Naive thymus-derived CD4-positive, alpha-beta T cell (primary cell): ENCODE measurements at regions of chr4 and their contacts with region 1.

Region 1: DNA sequence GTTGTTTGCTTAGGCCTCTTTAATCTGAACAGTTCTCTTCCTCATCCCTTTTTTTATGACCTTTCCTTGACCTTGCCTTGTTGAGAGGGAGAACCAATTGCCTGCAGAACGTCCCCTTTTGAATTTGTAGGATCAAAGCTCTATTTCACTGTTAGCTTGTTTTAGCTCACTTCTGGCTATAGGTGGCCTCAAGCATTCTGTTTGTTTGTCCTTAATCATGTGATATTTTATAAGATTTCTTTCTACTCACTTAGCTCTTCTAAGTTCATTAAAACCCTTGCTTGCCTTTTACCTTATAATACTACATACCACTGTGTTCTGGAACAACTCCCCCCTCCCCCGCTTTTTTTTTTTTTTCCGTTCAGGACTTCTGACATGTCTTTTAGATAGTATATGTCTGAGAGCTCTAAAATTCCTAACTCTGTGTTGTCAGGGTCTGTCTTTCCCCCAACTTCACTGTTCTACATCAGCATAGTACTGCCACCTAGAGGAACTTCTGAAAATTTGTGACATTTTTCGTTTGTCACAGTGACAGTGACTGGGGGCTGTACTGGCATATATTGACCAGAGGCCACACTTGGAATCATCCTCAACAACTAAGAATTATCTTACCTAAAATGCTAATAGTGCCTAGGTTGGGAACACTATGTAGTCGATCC is 128.5 kb downstream of the LARP7 start:
- DNase-seq: peak in 1 of 9 donors; percentile 6
- ATAC-seq: no peak
- H3K4me3 ChIP-seq: no peak overlapping the region
- H3K4me3 Mint-ChIP-seq: no peak overlapping the region
- H3K27ac ChIP-seq: no peak overlapping the region
- H3K27ac Mint-ChIP-seq: no peak overlapping the region
- H3K4me1 ChIP-seq: no peaks in the 10 kb centered on the region
- H3K4me1 Mint-ChIP-seq: peaks cover 0 to 4% (median 2%) of the 10 kb centered on the region in 7 donors
- H3K27me3 ChIP-seq: no peaks in the 10 kb centered on the region
- H3K27me3 Mint-ChIP-seq: peaks cover 3 to 9% (median 4%) of the 10 kb centered on the region in 5 donors

Region 2: DNA sequence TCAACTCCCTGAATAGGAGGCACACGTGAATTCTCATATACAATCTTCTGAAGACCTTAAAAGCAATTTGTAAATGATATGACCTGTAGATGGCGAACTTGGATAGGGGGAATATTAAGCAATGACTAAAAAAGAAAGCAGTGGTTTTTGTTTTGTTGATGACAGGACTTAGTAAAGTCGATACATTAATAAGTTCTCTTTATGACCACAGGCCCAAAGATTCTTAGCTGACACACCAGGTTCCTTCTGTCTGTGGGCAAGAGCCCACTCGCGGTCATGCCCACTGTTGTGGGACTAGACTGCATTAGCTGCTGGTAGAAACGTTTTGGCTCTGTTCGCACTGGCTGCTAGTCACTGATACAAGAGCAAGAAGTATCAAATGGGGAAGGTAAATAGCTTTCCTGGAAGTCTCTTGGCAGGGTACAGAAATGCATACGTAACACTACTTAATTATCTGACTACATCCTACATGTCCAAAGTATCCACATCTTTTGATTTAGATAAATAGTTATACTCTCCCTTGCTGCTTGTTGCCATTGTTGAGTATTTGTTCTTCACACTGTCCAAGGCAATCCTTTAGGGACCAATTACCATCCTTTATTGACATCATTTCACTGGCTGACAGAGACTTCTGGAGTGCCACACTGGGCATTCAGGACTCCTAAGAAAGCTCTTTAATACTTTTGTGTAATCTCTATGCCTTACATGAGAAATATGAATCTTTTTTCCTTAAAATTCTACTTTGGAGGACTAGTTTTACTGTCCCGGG is 437.3 kb before region 1 on chr4:
- CTCF ChIA-PET with region 1: interaction called, 3 read pairs
- POLR2A ChIA-PET with region 1: no interaction called
- intact Hi-C with region 1: loop called (anchors 5 kb)
- DNase-seq: peak in 4 of 9 donors; percentile 21 to 27 (median 24)
- ATAC-seq: peak; percentile 60
- H3K4me3 ChIP-seq: no peak overlapping the region
- H3K4me3 Mint-ChIP-seq: no peak overlapping the region
- H3K27ac ChIP-seq: no peak overlapping the region
- H3K27ac Mint-ChIP-seq: no peak overlapping the region
- H3K4me1 ChIP-seq: no peaks in the 10 kb centered on the region
- H3K4me1 Mint-ChIP-seq: peaks cover 0 to 9% (median under 1%) of the 10 kb centered on the region in 7 donors
- H3K27me3 ChIP-seq: no peaks in the 10 kb centered on the region
- H3K27me3 Mint-ChIP-seq: no peaks in the 10 kb centered on the region

Region 3: GRCh38 chr4:112704991-112705845 is 60.2 kb before region 1 on chr4:
- CTCF ChIA-PET with region 1: no interaction called
- POLR2A ChIA-PET with region 1: no interaction called
- intact Hi-C with region 1: loop called in 1 of 2 experiments (anchors 5 kb)
- DNase-seq: peak in 2 of 9 donors; percentile 2
- ATAC-seq: no peak
- H3K4me3 ChIP-seq: peak overlapping the region; percentile 31
- H3K4me3 Mint-ChIP-seq: peak overlapping the region; percentile 71 to 90 (median 84)
- H3K27ac ChIP-seq: no peak overlapping the region
- H3K27ac Mint-ChIP-seq: peak overlapping the region in 1 of 9 donors; percentile 46
- H3K4me1 ChIP-seq: peaks cover 5% of the 10 kb centered on the region in 2 donors
- H3K4me1 Mint-ChIP-seq: peaks cover 14 to 21% (median 18%) of the 10 kb centered on the region in 7 donors
- H3K27me3 ChIP-seq: peaks cover 0 to 17% of the 10 kb centered on the region in 2 donors
- H3K27me3 Mint-ChIP-seq: peaks cover 58 to 68% (median 60%) of the 10 kb centered on the region in 5 donors

Region 4: GRCh38 chr4:112938461-112939058 is 173.1 kb after region 1 on chr4:
- CTCF ChIA-PET with region 1: no interaction called
- POLR2A ChIA-PET with region 1: no interaction called
- intact Hi-C with region 1: loop called in 1 of 2 experiments (anchors 1 kb)
- DNase-seq: peak in 3 of 9 donors; percentile 3 to 14 (median 4)
- ATAC-seq: no peak
- H3K4me3 ChIP-seq: no peak overlapping the region
- H3K4me3 Mint-ChIP-seq: no peak overlapping the region
- H3K27ac ChIP-seq: no peak overlapping the region
- H3K27ac Mint-ChIP-seq: no peak overlapping the region
- H3K4me1 ChIP-seq: no peaks in the 10 kb centered on the region
- H3K4me1 Mint-ChIP-seq: no peaks in the 10 kb centered on the region
- H3K27me3 ChIP-seq: no peaks in the 10 kb centered on the region
- H3K27me3 Mint-ChIP-seq: peaks cover 9 to 26% (median 23%) of the 10 kb centered on the region in 5 donors

Region 5: GRCh38 chr4:114694770-114695169 is 1929.3 kb after region 1 on chr4:
- CTCF ChIA-PET with region 1: no interaction called
- POLR2A ChIA-PET with region 1: no interaction called
- intact Hi-C with region 1: loop called in 1 of 2 experiments (anchors 2 kb)
- DNase-seq: peak in 5 of 9 donors; percentile 1 to 17 (median 9)
- ATAC-seq: no peak
- H3K4me3 ChIP-seq: no peak overlapping the region
- H3K4me3 Mint-ChIP-seq: no peak overlapping the region
- H3K27ac ChIP-seq: no peak overlapping the region
- H3K27ac Mint-ChIP-seq: no peak overlapping the region
- H3K4me1 ChIP-seq: no peaks in the 10 kb centered on the region
- H3K4me1 Mint-ChIP-seq: peaks cover 0 to 6% (median 0%) of the 10 kb centered on the region in 7 donors
- H3K27me3 ChIP-seq: no peaks in the 10 kb centered on the region
- H3K27me3 Mint-ChIP-seq: peaks cover 0 to 16% (median 7%) of the 10 kb centered on the region in 5 donors